Natural killer cell (primary cell): ENCODE measurements at regions of chr11 and their contacts with region 1.

Region 1: GRCh38 chr11:63582935-63583677 is 19.9 kb upstream of the PLAAT2 start:
- DNase-seq: no peak
- ATAC-seq: peak; percentile 49 to 60 (median 53)
- H3K4me3 ChIP-seq: no peak overlapping the region
- H3K4me3 Mint-ChIP-seq: peak overlapping the region; percentile 29
- H3K27ac ChIP-seq: peak overlapping the region; percentile 86
- H3K27ac Mint-ChIP-seq: peak overlapping the region; percentile 89 to 91
- H3K4me1 ChIP-seq: peaks cover 14% of the 10 kb centered on the region
- H3K4me1 Mint-ChIP-seq: peaks cover 27 to 32% of the 10 kb centered on the region in 2 donors
- H3K27me3 ChIP-seq: no peaks in the 10 kb centered on the region
- H3K27me3 Mint-ChIP-seq: no peaks in the 10 kb centered on the region
- CTCF ChIP-seq: no peak

Region 2: DNA sequence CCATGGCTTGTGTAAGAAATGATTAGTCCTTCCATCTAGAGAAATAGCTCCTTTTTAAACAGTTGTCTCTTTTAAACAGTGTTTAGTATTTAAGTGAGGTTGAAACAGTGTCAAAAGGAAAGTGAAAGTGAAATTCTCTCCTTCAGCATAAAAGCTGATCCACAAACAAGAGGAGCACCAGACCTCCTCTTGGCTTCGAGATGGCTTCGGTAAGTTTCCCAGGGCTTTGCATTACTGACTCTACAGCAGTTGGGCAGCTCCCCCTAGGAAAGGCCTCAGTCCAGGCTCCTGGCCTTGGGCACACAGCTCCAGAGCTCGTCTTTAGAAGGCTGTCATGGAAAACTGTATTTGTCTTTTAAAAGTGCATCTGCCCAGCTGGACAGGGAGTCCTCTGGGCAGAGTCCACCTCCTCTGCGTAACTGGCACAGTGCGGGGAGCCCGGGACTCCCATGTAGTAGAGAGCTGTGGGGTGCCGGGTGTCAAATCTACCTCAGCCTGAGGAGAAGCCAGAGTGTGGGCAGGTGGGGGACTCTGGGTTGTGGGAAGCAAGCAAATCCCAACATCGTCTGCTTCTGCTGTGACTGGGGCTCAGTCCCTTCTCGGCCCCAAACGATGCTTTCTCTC is 46.3 kb before region 1 on chr11 and contains the start of gene PLAAT4:
- intact Hi-C with region 1: loop called (anchors 1 kb)
- DNase-seq: peak; percentile 52 to 77
- ATAC-seq: peak; percentile 59 to 71 (median 64)
- H3K4me3 ChIP-seq: peak within 1 kb of the TSS; percentile 75
- H3K4me3 Mint-ChIP-seq: peak within 1 kb of the TSS; percentile 96
- H3K27ac ChIP-seq: peak within 1 kb of the TSS; percentile 86
- H3K27ac Mint-ChIP-seq: peak within 1 kb of the TSS; percentile 93 to 97
- H3K4me1 ChIP-seq: peaks cover 76% of the 10 kb centered on the region
- H3K4me1 Mint-ChIP-seq: peaks cover 86 to 94% of the 10 kb centered on the region in 2 donors
- H3K27me3 ChIP-seq: no peaks in the 10 kb centered on the region
- H3K27me3 Mint-ChIP-seq: no peaks in the 10 kb centered on the region
- CTCF ChIP-seq: no peak
- total RNA-seq, gene PLAAT4: 204 to 215 (median 210) TPM

Region 3: DNA sequence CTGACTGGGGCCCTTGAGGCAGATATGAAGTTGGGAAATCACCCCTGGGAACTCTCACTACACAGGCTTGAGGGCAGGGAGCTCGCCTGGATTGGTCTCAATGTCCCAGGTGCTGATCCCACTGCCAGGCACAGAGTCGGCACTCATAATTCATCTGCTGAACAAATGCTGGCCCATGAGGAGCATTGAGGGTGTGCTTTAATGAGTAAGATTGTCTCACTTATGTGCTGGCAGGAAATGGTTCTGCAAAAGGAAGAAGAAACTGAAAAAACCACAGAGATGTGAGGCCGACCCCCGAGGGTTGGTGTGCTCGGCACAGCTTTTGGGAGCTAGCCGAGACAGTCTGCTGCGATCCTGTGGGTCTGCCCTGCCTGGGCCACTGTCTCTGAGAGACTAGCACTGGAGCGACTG is 29.4 kb before region 1 on chr11:
- intact Hi-C with region 1: loop called (anchors 1 kb)
- DNase-seq: peak; percentile 71 to 80
- ATAC-seq: peak; percentile 77 to 86 (median 86)
- H3K4me3 ChIP-seq: no peak overlapping the region
- H3K4me3 Mint-ChIP-seq: peak overlapping the region; percentile 85
- H3K27ac ChIP-seq: peak overlapping the region; percentile 93
- H3K27ac Mint-ChIP-seq: peak overlapping the region; percentile 97 to 98
- H3K4me1 ChIP-seq: peaks cover 48% of the 10 kb centered on the region
- H3K4me1 Mint-ChIP-seq: peaks cover 58 to 60% of the 10 kb centered on the region in 2 donors
- H3K27me3 ChIP-seq: no peaks in the 10 kb centered on the region
- H3K27me3 Mint-ChIP-seq: no peaks in the 10 kb centered on the region
- CTCF ChIP-seq: no peak